GM12878 (cell line): ENCODE measurements at regions of chr19 and their contacts with region 1.

Region 1: DNA sequence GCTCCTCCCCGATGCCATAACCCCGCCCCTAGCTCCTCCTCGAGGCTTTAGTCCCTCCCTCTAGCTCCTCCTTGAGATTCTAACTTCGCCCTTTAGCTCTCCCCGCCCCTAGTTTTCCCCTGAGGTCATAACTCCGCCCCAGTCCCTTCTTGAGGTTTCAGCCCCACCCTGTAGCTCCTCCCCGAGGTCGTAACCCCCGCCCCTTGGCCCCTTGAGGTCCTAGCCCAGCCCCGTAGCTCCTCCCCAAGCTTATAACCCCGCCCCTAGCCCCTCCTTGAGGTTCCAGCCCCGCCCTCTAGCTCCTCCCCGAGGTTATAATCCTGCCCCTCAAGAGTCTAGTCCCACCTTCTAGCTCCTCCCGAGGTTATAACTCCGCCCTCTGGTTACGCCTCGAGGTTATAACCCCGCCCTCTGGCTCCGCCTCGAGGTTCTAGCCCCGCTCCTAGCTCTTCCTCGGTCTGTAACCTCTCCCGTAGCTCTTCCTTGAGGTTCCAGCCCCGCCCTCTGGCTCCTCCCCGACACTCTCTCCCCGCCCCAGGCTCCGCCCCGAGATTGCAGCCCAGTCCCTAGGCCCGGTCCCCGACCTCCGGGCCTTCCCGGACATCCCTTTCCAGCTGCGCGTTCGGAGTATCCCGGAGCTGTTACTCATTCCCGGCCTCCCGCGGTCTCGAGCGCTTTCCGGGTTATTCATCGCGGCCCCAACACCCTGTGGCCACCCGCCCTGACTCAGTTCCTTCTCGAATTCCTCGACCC is 1.4 kb downstream of the PLAUR start:
- DNase-seq: peak; percentile 95
- ATAC-seq: peak; percentile 93
- H3K4me3 ChIP-seq: peak overlapping the region; percentile 84
- H3K27ac ChIP-seq: peak overlapping the region; percentile 51
- H3K4me1 ChIP-seq: peaks cover 14% of the 10 kb centered on the region
- H3K27me3 ChIP-seq: no peaks in the 10 kb centered on the region
- CTCF ChIP-seq: no peak
- EP300 ChIP-seq: no peak
- POLR2A ChIP-seq: no peak; the same call in 1 of the 2 replicates
- RAD21 ChIP-seq: no peak

Region 2: GRCh38 chr19:43555185-43555770 is 113.3 kb before region 1 on chr19:
- CTCF ChIA-PET with region 1: interaction called, 11 read pairs
- POLR2A ChIA-PET with region 1: no interaction called
- RAD21 ChIA-PET with region 1: interaction called, 4 read pairs
- SMC1A ChIA-PET with region 1: interaction called, 4 read pairs
- in situ Hi-C with region 1: no loop called
- intact Hi-C with region 1: no loop called
- DNase-seq: no peak
- ATAC-seq: peak; percentile 94
- H3K4me3 ChIP-seq: no peak overlapping the region
- H3K27ac ChIP-seq: no peak overlapping the region
- H3K4me1 ChIP-seq: no peaks in the 10 kb centered on the region
- H3K27me3 ChIP-seq: no peaks in the 10 kb centered on the region
- CTCF ChIP-seq: peak; percentile 86 to 95 (median 88)
- EP300 ChIP-seq: no peak
- POLR2A ChIP-seq: no peak
- RAD21 ChIP-seq: peak; percentile 75

Region 3: DNA sequence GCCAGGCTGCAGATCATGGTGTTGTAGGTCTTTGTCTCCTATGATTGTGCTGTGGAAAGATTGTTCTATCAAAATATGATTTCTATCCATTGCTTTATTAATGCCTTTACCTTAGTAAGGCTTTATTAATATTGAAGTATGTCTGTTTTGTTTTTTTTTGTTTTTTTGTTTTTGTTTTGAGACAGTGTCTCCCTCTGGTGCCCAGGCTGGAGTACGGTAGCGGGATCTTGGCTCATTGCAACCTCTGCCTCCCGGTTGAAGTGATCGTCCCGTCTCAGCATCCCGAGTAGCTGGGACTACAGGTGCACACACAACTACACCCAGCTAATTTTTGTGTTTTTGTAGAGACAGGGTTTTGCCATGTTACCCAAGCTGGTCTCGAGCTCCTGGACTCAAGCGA is 55.0 kb after region 1 on chr19:
- CTCF ChIA-PET with region 1: interaction called, 13 read pairs
- POLR2A ChIA-PET with region 1: interaction called, 6 read pairs
- RAD21 ChIA-PET with region 1: interaction called, 30 read pairs
- SMC1A ChIA-PET with region 1: interaction called, 22 read pairs
- in situ Hi-C with region 1: no loop called
- intact Hi-C with region 1: loop called (anchors 2 kb)
- DNase-seq: no peak
- ATAC-seq: no peak
- H3K4me3 ChIP-seq: no peak overlapping the region
- H3K27ac ChIP-seq: no peak overlapping the region
- H3K4me1 ChIP-seq: peaks cover 26% of the 10 kb centered on the region
- H3K27me3 ChIP-seq: no peaks in the 10 kb centered on the region
- CTCF ChIP-seq: 0 out of 6 replicates have a peak, but pooled peaks of 2 of the 3 experiments have one; percentile 9 to 24
- EP300 ChIP-seq: no peak
- POLR2A ChIP-seq: no peak
- RAD21 ChIP-seq: no peak; the same call in 1 of the 2 replicates

Region 4: DNA sequence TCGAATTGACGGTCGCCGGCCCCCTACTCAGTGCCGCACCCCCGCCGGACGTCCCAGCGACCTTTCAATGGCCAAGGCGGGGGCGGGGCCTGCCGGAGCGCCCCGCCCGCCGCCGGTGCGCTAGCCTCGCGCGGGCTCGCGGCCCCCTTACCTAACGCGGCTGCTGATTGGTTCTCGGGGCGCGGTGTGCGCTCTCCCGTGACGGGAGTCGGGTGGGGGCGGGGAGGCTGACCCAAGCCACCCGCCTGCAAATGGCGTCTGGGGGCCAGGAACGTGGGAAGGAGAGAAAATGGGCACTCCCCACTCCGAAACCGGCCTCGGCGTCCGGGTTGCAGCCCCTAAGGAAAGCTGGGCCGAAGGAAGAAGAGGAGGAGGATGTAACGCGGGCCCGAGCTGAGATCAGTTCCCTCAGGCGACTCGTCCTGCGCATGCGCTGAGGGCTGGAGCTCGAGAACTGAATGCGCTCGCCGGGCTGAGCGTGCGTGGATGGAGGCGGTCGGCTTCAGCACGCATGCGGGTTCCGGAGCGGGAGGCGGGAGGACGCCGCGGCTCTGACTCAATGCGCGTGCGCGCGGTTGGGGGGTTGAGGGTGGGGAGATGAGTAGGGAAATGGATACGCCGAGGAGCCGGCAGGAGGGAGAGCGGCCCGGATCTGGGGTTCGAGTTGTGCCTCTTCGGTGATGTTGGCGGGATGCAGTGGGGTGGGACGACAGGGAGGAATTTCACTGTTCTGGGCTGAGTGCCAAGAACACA is 86.1 kb after region 1 on chr19 and contains the start of gene SMG9:
- CTCF ChIA-PET with region 1: interaction called, 10 read pairs
- POLR2A ChIA-PET with region 1: interaction called, 8 read pairs
- RAD21 ChIA-PET with region 1: interaction called, 55 read pairs
- SMC1A ChIA-PET with region 1: interaction called, 10 read pairs
- in situ Hi-C with region 1: no loop called
- intact Hi-C with region 1: loop called (anchors 5 kb)
- DNase-seq: peak; percentile 89
- ATAC-seq: peak; percentile 77
- H3K4me3 ChIP-seq: peak within 1 kb of the TSS; percentile 84
- H3K27ac ChIP-seq: peak within 1 kb of the TSS; percentile 98
- H3K4me1 ChIP-seq: peaks cover 46% of the 10 kb centered on the region
- H3K27me3 ChIP-seq: no peaks in the 10 kb centered on the region
- CTCF ChIP-seq: no peak
- EP300 ChIP-seq: peak; percentile 27 to 28; a peak in 1 of 4 replicates
- POLR2A ChIP-seq: peak; percentile 94
- RAD21 ChIP-seq: no peak
- polyA plus RNA-seq, gene SMG9: 0.69 to 4.0 TPM

Region 5: GRCh38 chr19:43777163-43777700 is 108.7 kb after region 1 on chr19:
- CTCF ChIA-PET with region 1: interaction called, 48 read pairs
- POLR2A ChIA-PET with region 1: interaction called, 13 read pairs
- RAD21 ChIA-PET with region 1: interaction called, 86 read pairs
- SMC1A ChIA-PET with region 1: interaction called, 43 read pairs
- in situ Hi-C with region 1: no loop called
- intact Hi-C with region 1: loop called (anchors 2 kb)
- DNase-seq: no peak
- ATAC-seq: peak; percentile 29
- H3K4me3 ChIP-seq: peak overlapping the region; percentile 100
- H3K27ac ChIP-seq: peak overlapping the region; percentile 95
- H3K4me1 ChIP-seq: peaks cover 43% of the 10 kb centered on the region
- H3K27me3 ChIP-seq: no peaks in the 10 kb centered on the region
- CTCF ChIP-seq: no peak
- EP300 ChIP-seq: no peak
- POLR2A ChIP-seq: no peak
- RAD21 ChIP-seq: no peak

Region 6: DNA sequence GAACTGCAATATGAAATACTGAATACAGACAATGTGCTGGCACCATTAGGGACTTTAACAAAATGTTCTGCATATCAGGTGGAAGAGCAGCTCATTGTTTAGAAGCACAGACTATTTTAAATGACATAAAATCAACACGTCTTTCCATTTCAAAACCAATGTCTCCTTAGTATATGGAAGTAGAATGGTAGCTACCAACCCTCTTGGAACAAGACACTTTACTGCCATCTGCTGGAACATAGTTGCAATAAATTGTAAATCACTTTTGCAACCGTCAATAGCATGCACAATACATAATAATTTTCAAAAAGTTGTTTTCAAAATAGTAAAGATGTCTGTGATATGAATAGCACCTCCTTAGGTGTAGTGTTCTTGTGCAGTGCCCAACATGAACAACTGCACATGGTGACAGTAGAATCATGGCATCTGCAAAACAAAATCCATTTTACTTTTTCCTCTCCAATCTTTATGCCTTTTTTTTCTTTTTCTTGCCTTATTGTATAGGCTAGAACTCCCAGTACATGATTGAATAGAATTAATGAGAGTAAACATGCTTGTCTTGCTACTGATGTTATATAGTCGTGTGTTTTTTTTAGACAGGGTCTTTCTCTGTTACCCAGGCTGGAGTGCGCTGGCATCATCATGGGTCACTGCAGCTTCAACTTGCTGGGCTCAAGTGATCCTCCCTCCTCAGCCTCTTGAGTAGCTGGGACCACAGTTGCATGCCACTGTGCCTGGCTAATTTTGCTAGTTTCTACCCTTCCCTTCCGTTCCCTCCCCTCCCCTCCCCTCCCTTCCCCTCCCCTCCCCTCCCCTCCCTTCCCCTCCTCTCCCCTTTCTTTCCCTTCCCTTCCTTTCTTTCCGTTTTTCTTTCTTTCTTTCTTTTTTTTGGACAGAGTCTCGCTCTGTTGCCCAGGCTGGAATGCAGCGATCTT is 141.4 kb after region 1 on chr19:
- CTCF ChIA-PET with region 1: interaction called, 55 read pairs
- POLR2A ChIA-PET with region 1: interaction called, 3 read pairs
- RAD21 ChIA-PET with region 1: interaction called, 37 read pairs
- SMC1A ChIA-PET with region 1: interaction called, 14 read pairs
- in situ Hi-C with region 1: no loop called
- intact Hi-C with region 1: no loop called
- DNase-seq: peak; percentile 24
- ATAC-seq: peak; percentile 87
- H3K4me3 ChIP-seq: no peak overlapping the region
- H3K27ac ChIP-seq: no peak overlapping the region
- H3K4me1 ChIP-seq: no peaks in the 10 kb centered on the region
- H3K27me3 ChIP-seq: no peaks in the 10 kb centered on the region
- CTCF ChIP-seq: peak; percentile 36 to 76 (median 54); a peak in 4 of 6 replicates
- EP300 ChIP-seq: no peak
- POLR2A ChIP-seq: no peak
- RAD21 ChIP-seq: peak; percentile 78